ENCODE measurements at regions of chr2 and their contacts with region 1.

Region 1: GRCh38 chr2:231925303-231926179 is 655 bp downstream of the NPPC start:
- DNase-seq: peak; percentile 92
- H3K4me3 ChIP-seq: peak overlapping the region; percentile 60
- H3K27ac ChIP-seq: no peak overlapping the region
- H3K4me1 ChIP-seq: no peaks in the 10 kb centered on the region
- H3K27me3 ChIP-seq: peaks cover 34% of the 10 kb centered on the region

Region 2: GRCh38 chr2:232133078-232133477 is 207.5 kb after region 1 on chr2:
- in situ Hi-C with region 1: loop called (anchors 10 kb)
- DNase-seq: peak; percentile 22
- H3K4me3 ChIP-seq: no peak overlapping the region
- H3K27ac ChIP-seq: no peak overlapping the region
- H3K4me1 ChIP-seq: peaks cover 17% of the 10 kb centered on the region
- H3K27me3 ChIP-seq: no peaks in the 10 kb centered on the region

Measured in GM23248 (cell line).